T-cell (primary cell): ENCODE measurements at regions of chr6 and their contacts with region 1.

Region 1: DNA sequence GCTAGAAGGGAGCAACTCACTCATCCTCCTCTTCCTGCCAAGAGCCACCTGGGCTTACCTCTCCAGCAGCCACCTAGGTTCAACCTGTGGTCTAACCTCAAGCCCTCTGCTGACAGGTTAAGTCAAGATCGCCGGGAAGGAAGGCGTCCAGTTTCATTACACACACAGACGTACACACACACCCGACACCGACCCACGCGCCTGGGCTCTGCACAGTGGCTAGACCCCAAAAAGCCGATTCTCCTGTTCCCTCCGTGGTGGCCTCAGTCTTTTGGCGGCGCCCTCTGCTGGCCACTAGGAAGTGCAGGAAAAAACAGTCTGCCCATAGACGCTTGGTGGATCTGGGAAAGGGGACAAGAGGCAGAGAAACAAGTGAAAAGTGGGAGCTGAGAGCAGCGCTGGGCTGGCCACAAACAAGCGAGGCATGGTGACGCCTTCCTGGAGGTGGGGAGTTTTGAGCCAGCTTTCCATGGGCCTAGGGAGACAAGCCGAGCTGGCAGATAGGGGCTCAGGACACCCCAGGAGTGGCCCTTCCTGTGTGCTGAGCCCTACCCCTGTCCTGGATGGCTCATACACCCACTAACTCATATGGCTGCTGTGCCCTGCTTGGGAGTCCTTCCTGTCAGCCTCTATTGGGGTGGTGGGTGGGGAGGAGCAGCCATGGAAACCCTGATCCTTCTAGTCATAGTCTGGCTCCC is 52.7 kb downstream of the MRPL14 start:
- DNase-seq: peak; percentile 28 to 83 (median 52)
- ATAC-seq: peak; percentile 42 to 53 (median 48)
- H3K4me3 ChIP-seq: peak overlapping the region in 1 of 2 donors; percentile 41
- H3K4me3 Mint-ChIP-seq: peak overlapping the region; percentile 74 to 89 (median 81)
- H3K27ac ChIP-seq: no peak overlapping the region
- H3K27ac Mint-ChIP-seq: no peak overlapping the region
- H3K4me1 ChIP-seq: peaks cover 15 to 29% of the 10 kb centered on the region in 2 experiments
- H3K4me1 Mint-ChIP-seq: peaks cover 13 to 19% (median 19%) of the 10 kb centered on the region in 3 donors
- H3K27me3 ChIP-seq: peaks cover 0 to 58% of the 10 kb centered on the region in 2 experiments
- H3K27me3 Mint-ChIP-seq: peaks cover 3 to 20% of the 10 kb centered on the region in 2 donors

Region 2: GRCh38 chr6:43667245-43668150 is 407.1 kb before region 1 on chr6:
- CTCF ChIA-PET with region 1: interaction called, 4 to 20 read pairs
- POLR2A ChIA-PET with region 1: no interaction called
- DNase-seq: peak; percentile 46 to 87 (median 70)
- ATAC-seq: peak; percentile 75 to 76 (median 75)
- H3K4me3 ChIP-seq: peak overlapping the region in 1 of 2 donors; percentile 7
- H3K4me3 Mint-ChIP-seq: peak overlapping the region in 1 of 3 donors; percentile 63
- H3K27ac ChIP-seq: no peak overlapping the region
- H3K27ac Mint-ChIP-seq: peak overlapping the region in 1 of 2 donors; percentile 64
- H3K4me1 ChIP-seq: peaks cover 0 to 22% of the 10 kb centered on the region in 2 experiments
- H3K4me1 Mint-ChIP-seq: peaks cover 16 to 26% (median 21%) of the 10 kb centered on the region in 3 donors
- H3K27me3 ChIP-seq: peaks cover 0 to 18% of the 10 kb centered on the region in 2 experiments
- H3K27me3 Mint-ChIP-seq: no peaks in the 10 kb centered on the region

Region 3: DNA sequence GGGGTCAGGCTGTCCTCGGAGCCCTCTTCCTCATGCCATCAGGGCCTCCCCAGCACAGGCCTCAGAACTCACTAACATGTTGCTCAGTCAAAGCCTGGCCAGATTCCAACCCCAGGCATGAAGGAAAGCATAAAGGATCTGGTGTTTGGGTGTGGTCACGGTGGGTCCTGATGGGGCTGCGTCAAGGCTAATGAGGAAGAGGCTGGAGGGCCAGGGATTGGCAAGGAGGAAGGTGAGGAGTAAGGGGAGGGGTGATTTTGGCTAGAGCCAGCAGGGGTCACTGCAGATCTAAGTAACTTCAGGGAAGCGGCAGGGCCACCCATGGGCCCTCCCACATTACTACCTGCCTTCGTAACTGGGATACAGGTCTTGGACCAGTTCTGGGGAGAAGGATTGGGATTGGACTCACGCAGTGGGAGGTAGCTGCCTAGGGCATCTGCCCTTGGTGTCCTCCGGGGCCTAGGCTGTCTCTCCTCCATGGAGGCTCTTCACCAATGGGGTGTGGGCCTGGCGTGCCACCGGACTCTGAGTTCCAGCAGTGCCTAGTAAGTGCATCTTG is 350.8 kb before region 1 on chr6:
- CTCF ChIA-PET with region 1: interaction called, 9 to 25 read pairs
- POLR2A ChIA-PET with region 1: no interaction called
- DNase-seq: peak; percentile 24 to 82 (median 61)
- ATAC-seq: peak; percentile 60 to 76 (median 65)
- H3K4me3 ChIP-seq: no peak overlapping the region
- H3K4me3 Mint-ChIP-seq: peak overlapping the region in 1 of 3 donors; percentile 63
- H3K27ac ChIP-seq: no peak overlapping the region
- H3K27ac Mint-ChIP-seq: no peak overlapping the region
- H3K4me1 ChIP-seq: peaks cover 15 to 27% of the 10 kb centered on the region in 2 experiments
- H3K4me1 Mint-ChIP-seq: peaks cover 22 to 37% (median 24%) of the 10 kb centered on the region in 3 donors
- H3K27me3 ChIP-seq: peaks cover 0 to 10% of the 10 kb centered on the region in 2 experiments
- H3K27me3 Mint-ChIP-seq: peaks cover 0 to 4% of the 10 kb centered on the region in 2 donors

Region 4: GRCh38 chr6:43769526-43770416 is 304.8 kb before region 1 on chr6 and contains the start of gene VEGFA:
- CTCF ChIA-PET with region 1: interaction called, 17 to 27 read pairs
- POLR2A ChIA-PET with region 1: no interaction called
- DNase-seq: peak; percentile 66 to 93 (median 83)
- ATAC-seq: peak; percentile 77 to 85 (median 81)
- H3K4me3 ChIP-seq: peak within 1 kb of the TSS; percentile 49 to 88
- H3K4me3 Mint-ChIP-seq: peak within 1 kb of the TSS; percentile 86 to 92 (median 89)
- H3K27ac ChIP-seq: no peak within 1 kb of the TSS
- H3K27ac Mint-ChIP-seq: peak within 1 kb of the TSS in 1 of 2 donors; percentile 9
- H3K4me1 ChIP-seq: peaks cover 2 to 31% of the 10 kb centered on the region in 2 experiments
- H3K4me1 Mint-ChIP-seq: peaks cover 8 to 20% (median 15%) of the 10 kb centered on the region in 3 donors
- H3K27me3 ChIP-seq: peaks cover 0 to 62% of the 10 kb centered on the region in 2 experiments
- H3K27me3 Mint-ChIP-seq: peaks cover 16 to 27% of the 10 kb centered on the region in 2 donors
- total RNA-seq, gene VEGFA: 1.1 to 8.9 (median 6.4) TPM